Activated CD8-positive, alpha-beta T cell treated with anti-CD3 and anti-CD28 coated beads, Interleukin-2, amount 10 ng/mL, durations not matched to agents 7 days and 5 days (primary cell): ENCODE measurements at regions of chr5 and their contacts with region 1.

Region 1: DNA sequence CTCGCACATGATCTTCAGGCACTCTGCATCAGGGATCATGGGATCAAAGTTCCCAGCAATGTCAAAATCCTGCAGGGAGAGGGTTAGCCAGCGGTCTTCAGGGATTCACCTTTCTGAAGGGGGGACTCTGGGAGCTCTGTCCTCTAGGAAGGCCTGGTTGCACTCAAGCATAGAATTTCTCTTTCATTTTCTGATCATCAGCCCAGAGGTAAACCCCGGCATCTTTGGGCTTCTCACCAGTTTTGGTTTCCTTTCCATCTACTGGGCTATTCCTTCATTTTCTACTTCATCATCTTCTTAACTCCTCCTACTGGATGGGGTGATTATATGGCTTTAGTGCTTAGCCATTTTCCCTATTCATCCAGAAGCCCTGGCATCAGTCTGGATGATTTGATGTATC is 4.6 kb upstream of the DND1 start:
- DNase-seq: no peak
- ATAC-seq: no peak
- H3K4me3 Mint-ChIP-seq: no peak overlapping the region
- H3K27ac Mint-ChIP-seq: no peak overlapping the region
- H3K4me1 Mint-ChIP-seq: peaks cover 4% of the 10 kb centered on the region
- H3K27me3 Mint-ChIP-seq: no peaks in the 10 kb centered on the region

Region 2: GRCh38 chr5:140690941-140691924 is 13.3 kb after region 1 on chr5 and contains the starts of genes HARS1 and HARS2:
- CTCF ChIA-PET with region 1: interaction called, 3 read pairs
- POLR2A ChIA-PET with region 1: interaction called, 10 read pairs
- DNase-seq: peak; percentile 88
- ATAC-seq: peak; percentile 96
- H3K4me3 Mint-ChIP-seq: peak within 1 kb of the TSS; percentile 97
- H3K27ac Mint-ChIP-seq: peak within 1 kb of the TSS; percentile 97
- H3K4me1 Mint-ChIP-seq: peaks cover 48% of the 10 kb centered on the region
- H3K27me3 Mint-ChIP-seq: no peaks in the 10 kb centered on the region
- total RNA-seq, gene HARS1: 81.6 to 87.6 TPM
- total RNA-seq, gene HARS2: 27.3 to 29.0 TPM

Region 3: GRCh38 chr5:140857069-140857864 is 179.3 kb after region 1 on chr5:
- CTCF ChIA-PET with region 1: no interaction called
- POLR2A ChIA-PET with region 1: no interaction called
- DNase-seq: no peak
- ATAC-seq: no peak
- H3K4me3 Mint-ChIP-seq: no peak overlapping the region
- H3K27ac Mint-ChIP-seq: no peak overlapping the region
- H3K4me1 Mint-ChIP-seq: no peaks in the 10 kb centered on the region
- H3K27me3 Mint-ChIP-seq: peaks cover 2% of the 10 kb centered on the region

Region 4: GRCh38 chr5:141835928-141836670 is 1158.2 kb after region 1 on chr5:
- CTCF ChIA-PET with region 1: no interaction called
- POLR2A ChIA-PET with region 1: no interaction called
- DNase-seq: no peak
- ATAC-seq: no peak
- H3K4me3 Mint-ChIP-seq: no peak overlapping the region
- H3K27ac Mint-ChIP-seq: no peak overlapping the region
- H3K4me1 Mint-ChIP-seq: peaks cover 8% of the 10 kb centered on the region
- H3K27me3 Mint-ChIP-seq: peaks cover 13% of the 10 kb centered on the region